Transverse colon (tissue), 4 donors: ENCODE measurements at regions of chr3 and their contacts with region 1.

Region 1: DNA sequence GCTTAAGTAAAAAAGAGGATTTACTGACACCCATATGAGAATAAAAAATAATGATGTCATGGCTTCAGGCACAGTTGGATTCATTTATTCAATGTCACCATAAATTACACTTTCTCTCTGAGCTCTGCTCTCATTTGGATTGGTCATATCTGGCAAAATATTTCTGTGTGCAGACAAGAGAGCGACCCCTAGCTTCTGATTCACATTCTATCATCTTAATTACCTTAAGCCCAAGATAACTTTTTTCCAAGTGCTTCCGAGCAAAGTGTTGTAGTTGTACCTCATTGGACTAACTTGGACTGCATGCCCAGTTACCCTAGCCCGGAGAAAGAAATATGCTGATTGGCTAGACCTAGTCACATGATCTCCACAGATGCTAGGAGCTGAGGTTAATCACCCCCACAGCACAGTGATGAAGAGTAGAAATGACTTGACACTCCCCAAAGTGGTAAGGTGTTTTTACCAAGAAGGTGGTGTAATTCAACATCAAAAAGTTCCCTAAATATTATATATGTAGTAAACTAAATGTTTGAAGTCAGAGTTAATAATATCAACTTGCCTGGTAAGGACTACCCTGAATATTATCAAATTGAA is 552.2 kb upstream of the SUCLG2 start:
- DNase-seq: no peak
- H3K4me3 ChIP-seq: no peak overlapping the region
- H3K27ac ChIP-seq: no peak overlapping the region
- H3K4me1 ChIP-seq: no peaks in the 10 kb centered on the region
- H3K27me3 ChIP-seq: no peaks in the 10 kb centered on the region
- CTCF ChIP-seq: no peak
- EP300 ChIP-seq: no peak
- POLR2A ChIP-seq: no peak

Region 2: DNA sequence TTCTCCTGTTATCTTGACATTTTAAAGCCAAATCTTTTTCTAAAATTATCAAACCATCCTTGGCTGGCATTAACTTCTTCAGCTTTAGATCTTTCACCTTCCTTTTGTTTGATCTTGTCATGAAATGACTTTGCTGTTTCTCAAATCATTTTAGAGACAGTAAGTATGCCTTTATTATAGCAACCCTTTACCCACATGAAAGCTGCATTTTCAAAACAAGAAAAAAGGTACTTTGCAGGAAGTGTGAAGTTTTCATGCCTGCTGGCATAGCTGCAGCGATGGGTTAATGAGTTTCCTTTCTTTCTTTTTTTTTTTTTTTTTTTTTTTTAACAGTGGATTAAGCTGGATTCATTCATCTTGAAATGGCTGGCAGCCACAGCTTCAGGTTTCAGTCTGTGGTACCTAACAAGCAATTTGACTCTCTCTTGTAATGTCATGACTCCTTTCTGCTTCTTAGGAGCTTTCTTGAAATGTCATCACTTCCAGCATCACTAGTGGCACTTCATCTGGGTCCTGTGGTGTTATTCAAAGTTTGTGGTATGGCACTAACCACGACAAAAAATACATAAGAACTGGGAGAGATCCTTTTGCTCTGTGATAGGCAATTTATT is 1967.0 kb before region 1 on chr3:
- in situ Hi-C with region 1: no loop called
- intact Hi-C with region 1: loop called (anchors 5 kb)
- DNase-seq: no peak
- H3K4me3 ChIP-seq: no peak overlapping the region
- H3K27ac ChIP-seq: no peak overlapping the region
- H3K4me1 ChIP-seq: no peaks in the 10 kb centered on the region
- H3K27me3 ChIP-seq: no peaks in the 10 kb centered on the region
- CTCF ChIP-seq: no peak
- EP300 ChIP-seq: no peak
- POLR2A ChIP-seq: no peak